Dendritic cell treated with granulocyte-macrophage colony-stimulating factor and Interleukin-4, amounts not matched to agents 40 ng/mL and 50 ng/mL, for 4 days (primary cell): ENCODE measurements at regions of chr17 and their contacts with region 1.

Region 1: GRCh38 chr17:41548844-41549595 is 20.9 kb upstream of the KRT19 start:
- H3K4me3 Mint-ChIP-seq: peak overlapping the region; percentile 27
- H3K27ac Mint-ChIP-seq: peak overlapping the region; percentile 18
- H3K4me1 Mint-ChIP-seq: peaks cover 23% of the 10 kb centered on the region
- H3K27me3 Mint-ChIP-seq: peaks cover 39% of the 10 kb centered on the region

Region 2: GRCh38 chr17:40803617-40804082 is 745.4 kb before region 1 on chr17:
- intact Hi-C with region 1: loop called (anchors 5 kb)
- H3K4me3 Mint-ChIP-seq: no peak overlapping the region
- H3K27ac Mint-ChIP-seq: no peak overlapping the region
- H3K4me1 Mint-ChIP-seq: no peaks in the 10 kb centered on the region
- H3K27me3 Mint-ChIP-seq: peaks cover 42% of the 10 kb centered on the region

Region 3: DNA sequence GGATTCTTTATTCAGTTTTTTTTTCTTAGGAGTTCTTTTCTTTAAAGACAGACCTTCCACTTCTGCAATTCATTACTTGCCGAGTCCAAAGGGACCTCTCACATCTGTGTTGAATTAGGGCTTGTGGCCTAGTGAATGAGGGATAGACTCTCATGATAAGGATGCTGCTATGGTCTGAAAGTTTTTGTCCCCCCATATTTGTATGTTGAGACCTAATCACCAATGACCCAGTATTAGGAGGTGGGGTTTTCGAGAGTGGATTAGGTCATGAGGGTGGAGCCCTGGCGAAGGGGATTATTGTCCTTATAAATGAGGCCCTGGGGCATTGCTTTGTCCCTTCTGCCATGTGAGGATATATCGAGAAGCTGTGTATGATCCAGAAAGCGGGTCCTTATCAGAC is 691.5 kb before region 1 on chr17:
- intact Hi-C with region 1: loop called (anchors 5 kb)
- H3K4me3 Mint-ChIP-seq: no peak overlapping the region
- H3K27ac Mint-ChIP-seq: no peak overlapping the region
- H3K4me1 Mint-ChIP-seq: no peaks in the 10 kb centered on the region
- H3K27me3 Mint-ChIP-seq: peaks cover 16% of the 10 kb centered on the region

Region 4: DNA sequence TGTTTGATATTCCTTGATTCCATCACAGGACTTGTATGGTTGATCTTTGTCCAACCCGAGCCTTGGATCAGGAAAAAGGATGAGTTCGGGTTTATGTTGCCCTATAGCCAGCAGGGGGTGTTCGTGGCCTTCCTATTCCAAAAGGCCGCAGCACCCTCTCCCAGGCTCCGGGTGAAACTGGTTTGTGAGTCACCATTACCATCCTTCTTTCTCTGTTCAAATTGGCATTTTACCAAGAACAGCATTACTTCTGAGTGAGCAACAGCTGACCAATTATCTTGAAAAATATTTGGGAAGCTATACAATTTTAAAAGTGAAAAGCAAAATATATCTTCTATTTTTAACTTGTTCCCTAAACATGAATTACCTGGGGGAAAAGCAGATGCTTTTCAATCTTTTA is 639.7 kb before region 1 on chr17:
- intact Hi-C with region 1: loop called (anchors 1 kb)
- H3K4me3 Mint-ChIP-seq: no peak overlapping the region
- H3K27ac Mint-ChIP-seq: no peak overlapping the region
- H3K4me1 Mint-ChIP-seq: peaks cover 33% of the 10 kb centered on the region
- H3K27me3 Mint-ChIP-seq: peaks cover 30% of the 10 kb centered on the region

Region 5: GRCh38 chr17:41579484-41580243 is 30.6 kb after region 1 on chr17:
- intact Hi-C with region 1: loop called (anchors 1 kb)
- H3K4me3 Mint-ChIP-seq: no peak overlapping the region
- H3K27ac Mint-ChIP-seq: peak overlapping the region; percentile 23
- H3K4me1 Mint-ChIP-seq: peaks cover 15% of the 10 kb centered on the region
- H3K27me3 Mint-ChIP-seq: peaks cover 54% of the 10 kb centered on the region

Region 6: DNA sequence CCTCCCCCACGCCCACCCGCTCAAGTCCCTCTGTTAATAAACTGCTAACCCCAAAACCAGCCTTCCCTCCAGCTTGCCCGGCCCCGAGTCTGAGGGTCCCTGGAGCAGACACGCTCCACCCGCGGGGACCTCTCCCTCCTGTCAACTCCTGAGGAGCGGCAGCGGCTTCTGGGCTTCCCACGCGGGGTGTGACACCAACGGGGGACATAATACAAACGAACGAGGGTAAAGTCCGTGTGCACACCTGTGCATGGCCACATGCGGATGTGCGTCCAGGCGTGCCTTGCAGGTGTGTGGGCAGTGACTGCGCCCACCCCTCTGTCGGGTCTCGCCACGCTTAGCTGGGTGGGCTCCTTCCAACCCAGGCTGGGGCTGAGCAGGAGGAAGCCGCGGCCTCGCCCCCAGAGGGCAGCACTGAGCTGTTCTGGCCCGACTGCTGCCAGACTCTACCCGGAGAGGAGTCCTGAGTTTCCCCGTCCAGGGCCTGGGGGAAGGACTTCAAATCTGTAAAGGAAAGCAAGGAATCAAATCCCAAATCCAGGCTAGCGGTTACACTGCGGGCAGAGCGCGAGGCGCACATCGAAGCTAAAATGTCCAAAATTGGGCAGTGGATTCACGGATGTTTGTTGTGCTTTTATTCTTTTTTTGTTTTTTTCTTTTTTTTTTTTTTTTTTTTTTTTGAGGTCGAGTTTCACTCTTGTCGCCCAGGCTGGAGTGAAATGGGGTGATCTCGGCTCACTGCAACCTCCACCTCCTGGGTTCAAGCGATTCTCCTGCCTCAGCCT is 99.6 kb after region 1 on chr17:
- intact Hi-C with region 1: loop called (anchors 1 kb)
- H3K4me3 Mint-ChIP-seq: peak overlapping the region; percentile 69
- H3K27ac Mint-ChIP-seq: peak overlapping the region; percentile 69
- H3K4me1 Mint-ChIP-seq: peaks cover 51% of the 10 kb centered on the region
- H3K27me3 Mint-ChIP-seq: peaks cover 8% of the 10 kb centered on the region